HepG2 (cell line): ENCODE measurements at regions of chr4 and their contacts with region 1.

Region 1: DNA sequence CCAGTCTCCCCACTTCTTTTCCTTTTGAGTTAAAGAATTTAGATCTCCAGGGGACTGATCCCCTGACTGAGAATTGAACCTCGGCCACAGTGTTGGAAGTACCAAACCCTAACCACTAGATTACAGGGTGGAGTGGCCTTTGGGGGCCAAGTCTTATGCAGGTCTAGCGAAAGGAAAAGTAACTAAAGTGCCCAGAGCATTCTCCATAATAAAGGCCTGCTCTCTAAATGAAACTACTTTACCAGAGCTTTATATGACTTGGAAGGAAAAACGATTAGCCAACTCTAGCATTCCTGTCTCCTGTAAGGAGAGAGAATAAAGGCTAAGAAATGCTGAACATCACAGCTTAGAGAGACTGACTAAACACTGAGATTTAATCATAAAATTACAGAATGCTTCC is 788.0 kb downstream of the C4orf33 start:
- DNase-seq: no peak
- ATAC-seq: no peak
- H3K4me3 ChIP-seq: no peak overlapping the region
- H3K27ac ChIP-seq: no peak overlapping the region
- H3K4me1 ChIP-seq: no peaks in the 10 kb centered on the region
- H3K27me3 ChIP-seq: no peaks in the 10 kb centered on the region
- CTCF ChIP-seq: no peak
- EP300 ChIP-seq: no peak
- POLR2A ChIP-seq: no peak
- RAD21 ChIP-seq: no peak

Region 2: GRCh38 chr4:129862461-129862860 is 21.5 kb before region 1 on chr4:
- CTCF ChIA-PET with region 1: no interaction called
- POLR2A ChIA-PET with region 1: no interaction called
- in situ Hi-C with region 1: no loop called
- intact Hi-C with region 1: loop called (anchors 2 kb)
- DNase-seq: no peak
- ATAC-seq: no peak
- H3K4me3 ChIP-seq: no peak overlapping the region
- H3K27ac ChIP-seq: no peak overlapping the region
- H3K4me1 ChIP-seq: no peaks in the 10 kb centered on the region
- H3K27me3 ChIP-seq: no peaks in the 10 kb centered on the region
- CTCF ChIP-seq: no peak
- EP300 ChIP-seq: no peak
- POLR2A ChIP-seq: no peak
- RAD21 ChIP-seq: no peak